GM10248 (cell line): ENCODE measurements at regions of chr11 and their contacts with region 1.

Region 1: DNA sequence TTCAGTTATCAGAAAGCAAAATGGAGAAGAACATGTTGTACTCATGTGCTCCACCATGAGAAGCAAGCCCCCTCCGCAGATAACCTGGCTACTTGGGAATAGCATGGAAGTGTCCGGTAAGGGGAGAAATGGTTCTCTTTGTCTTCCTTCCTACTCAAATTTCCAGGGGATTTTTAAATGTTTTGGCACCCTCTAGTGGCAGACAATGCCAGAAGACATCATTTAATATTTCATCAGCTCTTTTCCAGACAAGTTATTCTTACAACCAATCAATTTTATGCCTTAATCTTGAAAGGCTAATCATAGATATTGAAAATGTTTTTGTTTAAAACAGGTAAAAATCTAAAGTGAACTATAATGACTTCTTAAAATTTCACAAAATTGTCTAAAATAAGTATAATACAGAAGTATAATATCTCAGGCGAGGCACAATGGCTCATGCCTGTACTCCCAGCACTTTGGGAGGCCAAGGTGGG is 15.7 kb downstream of the CRTAM start:
- DNase-seq: peak; percentile 56
- CTCF ChIP-seq: peak; percentile 62

Region 2: GRCh38 chr11:122628810-122629555 is 225.0 kb before region 1 on chr11:
- CTCF ChIA-PET with region 1: interaction called, 39 read pairs
- POLR2A ChIA-PET with region 1: interaction called, 3 read pairs
- DNase-seq: peak; percentile 65
- CTCF ChIP-seq: peak; percentile 80

Region 3: DNA sequence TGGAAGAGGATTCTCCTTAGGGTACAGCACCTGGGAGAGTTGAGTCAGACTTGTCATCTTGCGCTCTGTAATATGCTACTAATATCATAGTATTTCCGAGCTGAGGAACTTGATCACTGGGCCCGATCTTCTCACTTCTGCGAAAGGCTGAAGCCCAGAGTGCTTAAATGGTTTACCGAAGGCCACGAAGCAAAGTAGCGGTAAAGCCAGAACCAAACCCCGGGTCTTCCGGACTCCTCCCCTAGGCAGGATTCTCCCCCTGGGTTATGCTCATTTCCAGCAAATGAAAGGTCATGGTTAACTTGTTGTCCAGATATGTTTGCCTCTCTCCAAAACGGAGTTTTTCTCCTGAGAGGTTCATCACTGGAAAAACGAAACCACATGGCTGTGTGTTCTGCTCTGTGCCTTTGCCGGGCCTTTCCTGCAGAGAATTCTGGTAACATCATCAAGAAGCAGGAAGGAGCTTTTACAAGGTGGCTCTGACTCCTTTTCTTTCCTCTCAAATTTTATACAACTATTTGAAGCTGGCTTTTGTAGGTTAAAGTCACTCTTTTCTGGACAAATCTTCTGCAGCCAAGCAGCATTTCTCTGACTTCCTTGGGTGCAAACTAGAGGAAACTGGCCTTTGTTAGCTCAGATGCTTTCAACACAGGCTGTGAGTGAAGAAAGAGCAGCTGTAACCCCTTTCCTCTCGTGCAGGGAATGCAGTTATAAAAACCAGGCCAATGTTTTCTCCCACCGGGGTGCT is 163.0 kb before region 1 on chr11:
- CTCF ChIA-PET with region 1: no interaction called
- POLR2A ChIA-PET with region 1: no interaction called
- DNase-seq: no peak
- CTCF ChIP-seq: no peak

Region 4: DNA sequence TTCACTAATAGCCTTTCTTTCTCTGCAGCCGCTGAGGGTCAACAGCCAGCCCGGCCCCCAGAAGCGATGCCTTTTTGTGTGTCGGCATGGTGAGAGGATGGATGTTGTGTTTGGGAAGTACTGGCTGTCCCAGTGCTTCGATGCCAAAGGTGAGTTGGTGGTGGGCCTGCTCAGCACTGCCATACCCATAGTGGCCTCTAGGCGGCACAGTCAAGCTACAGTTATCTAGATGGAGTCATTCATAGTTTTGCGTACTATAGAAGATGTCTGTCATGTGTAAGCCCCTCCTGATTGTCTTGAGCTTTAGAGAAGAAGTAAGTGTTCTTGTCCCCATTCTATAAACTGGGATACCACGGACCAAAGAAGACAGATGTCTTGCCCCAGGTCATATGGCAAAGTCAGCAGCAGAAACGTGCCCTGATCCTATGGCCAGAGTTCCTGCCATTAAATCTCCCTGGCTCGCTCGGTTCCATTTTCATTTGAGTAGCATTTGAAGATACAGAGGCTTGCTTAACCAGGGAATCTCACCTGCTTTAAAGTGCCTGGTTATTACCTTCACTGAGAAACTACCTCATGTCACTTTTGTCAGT is 57.8 kb before region 1 on chr11:
- CTCF ChIA-PET with region 1: interaction called, 148 read pairs
- POLR2A ChIA-PET with region 1: no interaction called
- DNase-seq: peak; percentile 68
- CTCF ChIP-seq: peak; percentile 86

Region 5: GRCh38 chr11:122822241-122822640 is 31.8 kb before region 1 on chr11:
- CTCF ChIA-PET with region 1: interaction called, 15 read pairs
- POLR2A ChIA-PET with region 1: no interaction called
- DNase-seq: no peak
- CTCF ChIP-seq: no peak

Region 6: GRCh38 chr11:122874991-122875390 is 21.0 kb after region 1 on chr11:
- CTCF ChIA-PET with region 1: interaction called, 58 read pairs
- POLR2A ChIA-PET with region 1: no interaction called
- DNase-seq: peak; percentile 29
- CTCF ChIP-seq: no peak

Region 7: GRCh38 chr11:123062158-123062891 is 208.3 kb after region 1 on chr11:
- CTCF ChIA-PET with region 1: interaction called, 3 read pairs
- POLR2A ChIA-PET with region 1: interaction called, 10 read pairs
- DNase-seq: peak; percentile 94
- CTCF ChIP-seq: no peak